ENCODE measurements at regions of chr5 and their contacts with region 1.

Region 1: GRCh38 chr5:150816946-150817345 is 29.4 kb upstream of the IRGM start:
- DNase-seq: no peak
- H3K4me3 ChIP-seq: no peak overlapping the region
- H3K27ac ChIP-seq: no peak overlapping the region
- H3K4me1 ChIP-seq: 0 out of 7 replicates have a peak, but pooled peaks cover 0 to 3% (median 0%) of the 10 kb centered on the region in 4 experiments
- H3K27me3 ChIP-seq: no peaks in the 10 kb centered on the region
- CTCF ChIP-seq: peak in 1 of 3 experiments; percentile 14; a peak in 1 of 4 replicates
- EP300 ChIP-seq: no peak
- POLR2A ChIP-seq: no peak
- RAD21 ChIP-seq: no peak

Region 2: GRCh38 chr5:150846654-150847333 is 29.8 kb after region 1 on chr5:
- CTCF ChIA-PET with region 1: interaction called, 21 read pairs
- POLR2A ChIA-PET with region 1: no interaction called
- DNase-seq: peak; percentile 27 to 51
- H3K4me3 ChIP-seq: no peak overlapping the region
- H3K27ac ChIP-seq: no peak overlapping the region
- H3K4me1 ChIP-seq: peaks cover 0 to 3% (median 0%) of the 10 kb centered on the region in 4 experiments; a peak in 1 of 7 replicates
- H3K27me3 ChIP-seq: peaks cover 0 to 5% (median 4%) of the 10 kb centered on the region in 4 experiments; a peak in 4 of 7 replicates
- CTCF ChIP-seq: peak in 2 of 3 experiments; percentile 80; a peak in 3 of 4 replicates
- EP300 ChIP-seq: no peak
- POLR2A ChIP-seq: no peak
- RAD21 ChIP-seq: peak; percentile 89 to 93

Measured in H1 (cell line).